ENCODE measurements at regions of chr11 and their contacts with region 1.

Region 1: DNA sequence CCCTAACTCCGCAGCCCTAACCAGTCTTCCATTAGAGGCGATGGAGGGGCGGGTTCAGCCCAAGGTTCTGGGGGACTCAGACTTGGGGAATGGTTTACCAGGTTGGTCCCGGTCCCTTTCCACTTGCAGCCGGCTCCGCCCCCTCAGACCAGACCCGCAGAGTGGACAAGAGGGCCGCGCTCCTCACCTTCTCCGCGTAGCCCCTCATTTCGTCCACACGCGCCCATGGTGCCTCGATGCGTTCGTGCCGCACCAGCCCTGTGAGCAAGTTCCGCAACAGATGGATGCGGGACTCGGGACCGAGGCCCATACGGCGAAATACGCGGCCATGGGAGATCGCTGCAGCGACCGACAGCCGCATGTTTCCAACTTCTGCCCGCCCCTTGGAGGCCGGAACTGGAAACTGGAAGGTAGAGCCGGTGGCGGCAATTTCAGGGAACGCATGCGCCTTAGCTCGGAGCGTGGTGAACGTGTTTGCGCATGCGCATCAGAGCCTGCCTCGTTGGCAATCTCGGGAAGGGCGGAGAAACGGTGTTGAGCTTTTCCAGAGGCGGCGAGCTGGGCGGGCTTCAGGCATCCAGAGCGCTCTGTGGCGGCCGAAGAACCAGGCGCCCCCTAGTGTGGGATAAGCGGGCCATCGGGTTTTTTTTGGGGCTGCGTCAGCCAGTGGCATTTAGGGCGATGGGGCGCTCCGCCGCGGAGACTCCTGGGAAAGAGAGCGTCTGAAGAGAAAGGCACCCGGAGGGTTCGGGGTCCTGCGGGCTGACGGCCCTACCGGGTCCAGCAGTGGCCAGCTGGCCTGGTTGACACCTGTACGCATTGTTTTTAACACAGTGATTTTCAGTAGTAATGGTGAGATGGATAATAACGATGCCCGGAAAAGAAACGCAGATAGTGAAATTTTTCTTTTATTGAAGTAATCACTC is at the start of gene MRPL17:
- DNase-seq: peak; percentile 100
- H3K4me3 Mint-ChIP-seq: peak within 1 kb of the TSS; percentile 96
- H3K27ac Mint-ChIP-seq: peak within 1 kb of the TSS; percentile 95
- H3K4me1 Mint-ChIP-seq: peaks cover 31% of the 10 kb centered on the region
- H3K27me3 Mint-ChIP-seq: no peaks in the 10 kb centered on the region
- total RNA-seq, gene MRPL17: 54.1 to 56.3 TPM

Region 2: GRCh38 chr11:6531267-6531752 is 151.9 kb before region 1 on chr11:
- CTCF ChIA-PET with region 1: interaction called, 57 read pairs
- POLR2A ChIA-PET with region 1: interaction called, 3 read pairs
- DNase-seq: peak; percentile 29
- H3K4me3 Mint-ChIP-seq: no peak overlapping the region
- H3K27ac Mint-ChIP-seq: no peak overlapping the region
- H3K4me1 Mint-ChIP-seq: peaks cover 10% of the 10 kb centered on the region
- H3K27me3 Mint-ChIP-seq: no peaks in the 10 kb centered on the region

Region 3: GRCh38 chr11:6612213-6613041 is 70.8 kb before region 1 on chr11 and contains the start of gene TAF10:
- CTCF ChIA-PET with region 1: interaction called, 59 read pairs
- POLR2A ChIA-PET with region 1: interaction called, 49 read pairs
- DNase-seq: peak; percentile 96
- H3K4me3 Mint-ChIP-seq: peak within 1 kb of the TSS; percentile 88
- H3K27ac Mint-ChIP-seq: peak within 1 kb of the TSS; percentile 87
- H3K4me1 Mint-ChIP-seq: peaks cover 47% of the 10 kb centered on the region
- H3K27me3 Mint-ChIP-seq: no peaks in the 10 kb centered on the region
- total RNA-seq, gene TAF10: 159 to 161 TPM

Region 4: DNA sequence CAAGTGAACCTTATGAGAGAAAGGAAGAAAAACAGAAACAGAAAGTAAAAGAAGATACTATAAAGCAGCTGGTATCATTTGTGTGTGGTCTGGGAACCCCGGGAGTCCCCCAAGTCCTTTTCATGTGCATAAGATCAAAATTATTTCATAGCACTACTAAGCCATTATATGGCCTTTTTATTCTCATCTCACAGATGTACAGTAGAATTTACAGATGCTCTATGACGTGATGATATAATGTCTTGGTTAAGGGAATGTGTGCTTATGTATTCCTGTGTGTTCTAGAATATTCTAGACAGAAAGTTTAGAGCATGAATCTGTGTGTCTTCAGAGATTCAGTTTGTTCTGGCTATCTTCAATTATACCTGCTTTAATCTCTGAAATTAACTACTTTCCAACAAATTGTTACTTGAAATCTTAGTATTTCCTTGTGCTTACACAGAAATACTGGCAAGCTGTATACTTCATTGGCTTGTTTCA is 55.4 kb before region 1 on chr11:
- CTCF ChIA-PET with region 1: interaction called, 4 read pairs
- POLR2A ChIA-PET with region 1: interaction called, 11 read pairs
- DNase-seq: no peak
- H3K4me3 Mint-ChIP-seq: peak overlapping the region; percentile 40
- H3K27ac Mint-ChIP-seq: peak overlapping the region; percentile 5
- H3K4me1 Mint-ChIP-seq: peaks cover 24% of the 10 kb centered on the region
- H3K27me3 Mint-ChIP-seq: no peaks in the 10 kb centered on the region

Region 5: GRCh38 chr11:6667733-6668374 is 15.3 kb before region 1 on chr11:
- CTCF ChIA-PET with region 1: interaction called, 44 read pairs
- POLR2A ChIA-PET with region 1: interaction called, 42 read pairs
- DNase-seq: peak; percentile 57
- H3K4me3 Mint-ChIP-seq: no peak overlapping the region
- H3K27ac Mint-ChIP-seq: peak overlapping the region; percentile 2
- H3K4me1 Mint-ChIP-seq: peaks cover 59% of the 10 kb centered on the region
- H3K27me3 Mint-ChIP-seq: peaks cover 6% of the 10 kb centered on the region